Activated CD8-positive, alpha-beta T cell treated with anti-CD3 and anti-CD28 coated beads for 36 hours (primary cell): ENCODE measurements at regions of chr7 and their contacts with region 1.

Region 1: DNA sequence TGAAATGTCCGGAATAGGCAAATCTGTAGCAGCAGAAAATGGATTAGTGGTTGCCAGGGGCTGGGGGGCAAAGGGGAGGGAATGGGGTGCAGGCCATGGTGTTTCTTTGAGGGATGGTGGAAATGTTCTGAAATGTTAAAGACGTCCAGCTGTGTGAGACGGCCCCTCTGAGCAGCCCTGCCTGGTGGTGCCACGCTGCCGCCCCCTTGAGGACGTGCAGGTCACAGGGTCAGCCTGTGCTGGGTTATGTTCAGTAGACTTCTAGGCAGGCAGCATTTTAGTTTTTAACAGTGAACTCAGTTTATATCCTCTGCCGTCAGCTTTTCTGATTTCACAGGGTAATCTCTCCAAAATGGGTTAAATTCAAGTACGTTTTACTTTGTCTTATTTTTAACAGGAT is 9.4 kb downstream of the NUB1 start:
- DNase-seq: peak; percentile 75
- ATAC-seq: no peak
- H3K4me3 Mint-ChIP-seq: peak overlapping the region; percentile 52
- H3K27ac Mint-ChIP-seq: peak overlapping the region; percentile 86
- H3K4me1 Mint-ChIP-seq: peaks cover 47% of the 10 kb centered on the region
- H3K27me3 Mint-ChIP-seq: no peaks in the 10 kb centered on the region
- CTCF ChIP-seq: no peak

Region 2: DNA sequence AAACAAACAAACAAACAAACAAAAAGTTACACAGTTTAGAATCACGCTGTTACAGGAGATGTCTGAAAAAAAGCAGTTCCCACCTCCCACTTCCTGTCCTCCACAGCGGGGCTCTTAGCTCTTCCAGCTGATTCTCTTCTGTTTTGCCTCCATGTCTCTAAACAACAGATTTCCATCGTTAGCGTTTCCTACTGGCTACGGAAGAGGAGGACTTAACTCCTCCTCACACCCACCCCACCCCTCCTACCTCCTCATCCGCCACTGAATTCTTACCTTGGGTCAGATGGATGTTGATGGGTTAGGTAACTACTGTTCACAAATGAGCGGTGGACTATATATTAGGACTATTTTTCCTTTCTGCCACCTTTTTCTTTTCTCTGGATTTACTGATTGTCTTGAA is 46.2 kb before region 1 on chr7:
- CTCF ChIA-PET with region 1: interaction called, 59 read pairs
- POLR2A ChIA-PET with region 1: no interaction called
- intact Hi-C with region 1: no loop called
- DNase-seq: no peak
- ATAC-seq: no peak
- H3K4me3 Mint-ChIP-seq: peak overlapping the region; percentile 23
- H3K27ac Mint-ChIP-seq: no peak overlapping the region
- H3K4me1 Mint-ChIP-seq: peaks cover 6% of the 10 kb centered on the region
- H3K27me3 Mint-ChIP-seq: peaks cover 24% of the 10 kb centered on the region
- CTCF ChIP-seq: no peak

Region 3: DNA sequence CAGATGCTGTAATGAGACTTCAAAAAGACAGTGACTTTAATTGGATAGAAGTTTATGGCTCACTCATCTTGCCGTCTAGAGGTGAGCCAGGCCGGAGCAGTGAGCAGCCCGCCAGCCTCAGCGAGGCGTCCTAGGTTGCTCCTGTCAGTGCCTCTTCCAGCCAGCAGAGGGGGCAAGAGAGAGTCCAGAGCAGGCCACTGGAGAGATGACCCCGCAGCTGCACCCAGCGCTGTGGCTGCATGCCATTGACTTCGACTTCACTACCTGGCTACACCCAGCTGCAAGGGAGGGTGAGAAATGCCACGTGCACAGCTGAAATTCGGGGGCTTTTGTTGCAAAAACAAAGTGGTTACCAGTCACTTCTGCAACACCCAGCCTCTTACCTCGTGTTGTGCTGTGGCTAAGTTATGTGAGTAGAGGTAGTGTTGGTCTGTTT is 17.1 kb after region 1 on chr7:
- CTCF ChIA-PET with region 1: interaction called, 18 read pairs
- POLR2A ChIA-PET with region 1: interaction called, 6 read pairs
- intact Hi-C with region 1: no loop called
- DNase-seq: peak; percentile 88
- ATAC-seq: peak; percentile 100
- H3K4me3 Mint-ChIP-seq: no peak overlapping the region
- H3K27ac Mint-ChIP-seq: no peak overlapping the region
- H3K4me1 Mint-ChIP-seq: peaks cover 11% of the 10 kb centered on the region
- H3K27me3 Mint-ChIP-seq: no peaks in the 10 kb centered on the region
- CTCF ChIP-seq: peak; percentile 93

Region 4: GRCh38 chr7:151494301-151495284 is 143.6 kb after region 1 on chr7:
- CTCF ChIA-PET with region 1: no interaction called
- POLR2A ChIA-PET with region 1: no interaction called
- intact Hi-C with region 1: no loop called
- DNase-seq: no peak
- ATAC-seq: no peak
- H3K4me3 Mint-ChIP-seq: no peak overlapping the region
- H3K27ac Mint-ChIP-seq: peak overlapping the region; percentile 47
- H3K4me1 Mint-ChIP-seq: peaks cover 47% of the 10 kb centered on the region
- H3K27me3 Mint-ChIP-seq: no peaks in the 10 kb centered on the region
- CTCF ChIP-seq: no peak